Activated CD4-positive, alpha-beta memory T cell treated with anti-CD3 and anti-CD28 coated beads for 36 hours (primary cell): ENCODE measurements at regions of chr5 and their contacts with region 1.

Region 1: DNA sequence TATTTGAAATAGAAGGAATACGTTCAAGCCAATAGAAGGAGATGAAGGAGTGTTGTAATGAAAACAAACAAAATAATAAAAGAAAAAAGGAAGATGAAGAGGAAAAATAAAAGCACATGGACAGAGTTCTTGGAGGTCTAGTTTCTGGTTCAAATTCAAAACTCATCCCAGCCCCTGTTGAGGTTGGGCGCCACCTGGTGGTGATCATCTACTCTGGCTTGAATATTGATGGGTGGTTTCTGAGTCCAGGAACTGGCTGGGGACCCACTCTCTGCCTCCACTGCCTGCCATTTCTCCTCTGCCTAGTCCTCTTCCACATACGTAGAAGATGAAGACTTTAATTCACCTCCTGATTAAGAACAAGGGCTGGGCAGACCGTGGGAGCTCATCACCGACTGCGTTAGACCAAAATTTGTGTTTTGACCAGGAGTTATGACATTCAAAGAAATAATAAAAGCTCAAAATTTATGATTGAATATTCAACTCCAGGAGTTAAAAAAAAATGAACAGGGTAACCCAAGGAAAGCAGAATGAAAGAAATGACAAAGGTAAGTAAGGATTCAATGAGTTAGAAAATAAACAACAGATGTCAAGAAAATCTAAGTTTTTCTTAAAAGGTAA is 99.0 kb upstream of the SLC1A3 start:
- DNase-seq: peak; percentile 78
- H3K4me3 Mint-ChIP-seq: no peak overlapping the region
- H3K27ac Mint-ChIP-seq: no peak overlapping the region
- H3K4me1 Mint-ChIP-seq: no peaks in the 10 kb centered on the region
- H3K27me3 Mint-ChIP-seq: no peaks in the 10 kb centered on the region

Region 2: DNA sequence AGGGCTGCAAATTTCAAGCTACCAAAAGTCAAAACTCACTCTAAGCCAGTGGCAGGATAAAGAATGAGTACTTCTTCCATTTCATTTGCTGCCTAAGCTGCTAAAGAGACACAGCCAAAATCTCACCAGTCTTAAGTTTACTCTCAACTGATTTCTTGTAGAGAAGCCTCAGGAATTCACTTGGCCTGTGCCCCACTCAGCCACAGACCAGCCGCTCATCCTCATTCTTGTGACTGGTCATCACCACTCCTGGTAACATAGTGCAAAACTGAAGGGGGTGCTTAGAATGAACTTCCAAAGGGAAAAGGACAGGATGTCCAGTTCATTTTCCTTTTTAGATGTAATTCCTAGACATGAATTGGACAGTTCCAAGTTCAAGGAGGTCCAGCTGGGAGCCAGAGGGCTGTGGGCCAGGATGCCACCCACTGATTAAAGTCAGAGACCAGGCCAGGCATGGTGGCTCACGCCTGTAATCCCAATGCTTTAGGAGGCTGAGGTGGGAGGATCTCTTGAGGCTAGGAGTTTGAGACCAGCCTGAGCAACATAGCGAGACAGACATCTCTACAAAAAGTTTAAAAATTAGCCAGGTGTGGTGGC is 133.1 kb before region 1 on chr5:
- CTCF ChIA-PET with region 1: no interaction called
- POLR2A ChIA-PET with region 1: no interaction called
- intact Hi-C with region 1: no loop called
- DNase-seq: no peak
- H3K4me3 Mint-ChIP-seq: no peak overlapping the region
- H3K27ac Mint-ChIP-seq: no peak overlapping the region
- H3K4me1 Mint-ChIP-seq: no peaks in the 10 kb centered on the region
- H3K27me3 Mint-ChIP-seq: peaks cover 4% of the 10 kb centered on the region

Region 3: DNA sequence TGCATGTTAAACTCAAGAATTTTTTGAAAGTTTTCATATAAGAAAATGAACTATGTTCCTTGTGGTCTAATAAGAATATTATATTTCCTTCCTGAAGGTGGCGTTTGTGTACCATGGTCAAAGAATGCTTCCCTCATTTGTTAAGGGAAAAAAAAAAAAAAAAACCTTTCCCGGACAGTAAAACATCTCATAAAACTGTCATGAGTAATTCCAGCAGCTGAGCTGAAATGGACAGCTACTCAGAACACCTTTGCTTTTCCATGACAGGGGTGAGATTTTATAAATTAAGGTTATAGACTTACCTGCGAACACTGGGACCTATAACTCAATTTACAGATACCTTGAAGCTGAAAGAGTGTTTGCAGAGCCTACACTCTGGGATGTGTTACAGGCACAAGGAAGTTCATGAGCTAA is 92.6 kb before region 1 on chr5:
- CTCF ChIA-PET with region 1: interaction called, 4 read pairs
- POLR2A ChIA-PET with region 1: no interaction called
- intact Hi-C with region 1: loop called (anchors 1 kb)
- DNase-seq: no peak
- H3K4me3 Mint-ChIP-seq: no peak overlapping the region
- H3K27ac Mint-ChIP-seq: no peak overlapping the region
- H3K4me1 Mint-ChIP-seq: peaks cover 7% of the 10 kb centered on the region
- H3K27me3 Mint-ChIP-seq: peaks cover 3% of the 10 kb centered on the region